Breast epithelium (tissue), 4 donors: ENCODE measurements at regions of chr21 and their contacts with region 1.

Region 1: DNA sequence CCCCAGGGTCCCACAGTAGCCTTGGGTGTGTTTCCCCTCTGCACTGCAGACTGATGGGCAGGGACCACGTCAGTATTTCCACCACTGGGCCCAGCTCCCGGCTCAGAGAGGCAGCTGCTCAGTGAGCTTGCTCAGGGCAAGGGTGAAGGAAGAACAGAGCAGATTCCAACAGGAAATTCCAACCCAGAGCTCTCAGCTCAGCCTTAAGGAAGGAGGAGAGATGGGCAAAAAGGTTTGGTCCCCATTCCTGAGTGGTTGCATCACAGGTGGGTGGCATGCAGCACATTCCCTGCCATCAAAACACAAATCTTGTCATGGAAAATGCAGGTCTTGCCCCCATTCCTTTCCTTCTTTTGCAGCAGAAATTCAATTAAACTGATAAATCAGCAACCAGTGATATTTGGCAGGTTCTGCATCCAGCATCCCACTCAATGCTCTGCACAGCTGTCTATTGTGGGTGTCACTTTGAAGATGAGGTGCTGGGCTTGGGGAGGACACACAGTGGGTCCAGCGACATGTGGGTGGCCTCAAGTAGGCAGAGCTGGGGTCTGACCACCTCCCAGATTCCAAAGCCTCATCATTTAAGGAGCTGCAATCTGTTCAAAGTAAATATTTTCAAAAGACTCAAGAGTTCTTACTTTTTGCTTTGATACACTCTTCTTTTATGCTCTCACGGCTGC is 315.4 kb downstream of the DSCAM start:
- DNase-seq: no peak
- H3K4me3 ChIP-seq: no peak overlapping the region
- H3K27ac ChIP-seq: no peak overlapping the region
- H3K4me1 ChIP-seq: no peaks in the 10 kb centered on the region
- H3K27me3 ChIP-seq: no peaks in the 10 kb centered on the region
- CTCF ChIP-seq: no peak
- POLR2A ChIP-seq: no peak

Region 2: DNA sequence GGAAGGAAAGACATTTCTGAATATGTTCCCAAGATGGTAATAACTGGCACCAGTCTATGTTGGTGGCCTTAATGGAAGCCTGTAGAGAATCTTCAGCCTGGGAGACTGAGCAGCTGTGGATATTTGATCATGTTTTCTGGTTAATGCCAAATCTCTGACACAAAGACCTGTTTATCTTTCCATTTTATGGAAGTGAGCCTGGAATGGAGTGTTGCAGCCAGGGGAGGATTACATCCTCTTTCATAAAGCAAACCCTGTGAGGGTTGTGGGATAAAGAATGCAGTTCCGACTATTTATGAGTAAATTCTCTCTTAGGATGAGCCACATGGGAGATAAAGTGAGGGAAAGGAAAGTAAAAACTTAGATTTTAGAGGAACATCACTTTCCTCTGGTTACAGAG is 520.2 kb before region 1 on chr21:
- intact Hi-C with region 1: loop called (anchors 5 kb)
- DNase-seq: no peak
- H3K4me3 ChIP-seq: no peak overlapping the region
- H3K27ac ChIP-seq: no peak overlapping the region
- H3K4me1 ChIP-seq: no peaks in the 10 kb centered on the region
- H3K27me3 ChIP-seq: no peaks in the 10 kb centered on the region
- CTCF ChIP-seq: no peak
- POLR2A ChIP-seq: no peak